ENCODE measurements at regions of chr5 and their contacts with region 1.

Region 1: DNA sequence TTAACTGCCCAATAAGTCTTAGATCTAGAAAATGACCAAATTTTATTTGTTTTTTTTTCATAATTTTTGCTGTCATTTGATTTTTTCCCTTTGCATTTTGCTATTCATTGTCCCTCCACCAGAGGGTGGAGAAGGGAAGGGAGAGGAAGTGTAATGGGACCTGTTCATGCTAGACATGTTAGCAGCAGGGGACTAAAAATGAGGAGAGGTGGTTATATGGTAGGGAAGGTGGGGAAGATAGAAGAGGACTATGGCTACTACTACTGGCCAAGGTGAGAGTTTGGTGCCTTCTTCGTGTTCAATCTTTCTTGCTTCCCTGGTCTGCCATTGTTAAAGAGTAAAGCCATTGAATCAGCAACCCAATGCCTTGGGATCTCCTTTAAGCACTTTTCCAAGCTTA is 6.4 kb downstream of the GRIA1 start:
- DNase-seq: no peak
- CTCF ChIP-seq: peak; percentile 51

Region 2: DNA sequence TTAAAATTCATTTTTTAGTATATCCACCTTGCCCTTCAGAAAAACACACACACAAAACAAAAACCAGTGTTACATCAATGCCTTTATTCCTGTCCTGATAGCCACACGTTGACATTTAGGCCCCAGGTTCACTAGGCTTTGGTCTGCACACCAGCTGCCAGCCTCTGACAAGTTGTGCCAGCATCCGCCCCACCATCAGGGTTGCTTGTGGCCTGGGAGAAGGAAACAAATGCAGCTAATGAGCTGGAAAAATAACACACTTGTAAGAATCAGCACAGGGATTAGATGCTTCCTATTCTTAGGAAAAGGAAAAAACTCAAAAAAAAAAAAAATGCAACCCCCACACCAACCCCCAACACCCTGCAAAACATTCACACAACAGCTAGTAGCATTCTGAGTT is 410.3 kb before region 1 on chr5:
- CTCF ChIA-PET with region 1: no interaction called
- POLR2A ChIA-PET with region 1: no interaction called
- DNase-seq: no peak
- CTCF ChIP-seq: no peak

Region 3: DNA sequence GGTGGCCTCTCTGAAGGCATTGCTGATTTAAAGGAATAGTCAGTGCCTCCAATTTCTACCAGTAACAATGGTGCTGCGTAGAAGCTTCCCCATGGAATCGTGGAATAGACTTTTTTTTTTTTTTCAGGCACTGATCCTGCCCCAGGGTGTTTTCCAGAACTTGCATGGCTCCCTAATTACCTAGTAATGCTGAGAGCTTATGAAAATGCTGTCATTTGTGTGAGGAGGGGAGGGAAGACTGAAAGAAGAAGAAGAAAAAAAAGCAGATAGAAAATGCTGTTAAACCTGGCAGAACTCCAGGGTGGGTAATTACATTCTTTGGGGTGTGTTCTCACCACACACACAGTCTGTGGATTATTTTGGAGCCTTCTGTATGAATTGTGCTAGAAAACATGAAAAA is 11.2 kb before region 1 on chr5:
- CTCF ChIA-PET with region 1: interaction called, 24 read pairs
- POLR2A ChIA-PET with region 1: no interaction called
- DNase-seq: no peak
- CTCF ChIP-seq: no peak

Measured in GM10248 (cell line).